ENCODE measurements at regions of chrX and their contacts with region 1.

Region 1: GRCh38 chrX:78886550-78886949 is 58.6 kb upstream of the P2RY10 start:
- DNase-seq: no peak
- H3K4me3 Mint-ChIP-seq: no peak overlapping the region
- H3K27ac Mint-ChIP-seq: no peak overlapping the region
- H3K4me1 Mint-ChIP-seq: peaks cover 8% of the 10 kb centered on the region
- H3K27me3 Mint-ChIP-seq: no peaks in the 10 kb centered on the region

Region 2: DNA sequence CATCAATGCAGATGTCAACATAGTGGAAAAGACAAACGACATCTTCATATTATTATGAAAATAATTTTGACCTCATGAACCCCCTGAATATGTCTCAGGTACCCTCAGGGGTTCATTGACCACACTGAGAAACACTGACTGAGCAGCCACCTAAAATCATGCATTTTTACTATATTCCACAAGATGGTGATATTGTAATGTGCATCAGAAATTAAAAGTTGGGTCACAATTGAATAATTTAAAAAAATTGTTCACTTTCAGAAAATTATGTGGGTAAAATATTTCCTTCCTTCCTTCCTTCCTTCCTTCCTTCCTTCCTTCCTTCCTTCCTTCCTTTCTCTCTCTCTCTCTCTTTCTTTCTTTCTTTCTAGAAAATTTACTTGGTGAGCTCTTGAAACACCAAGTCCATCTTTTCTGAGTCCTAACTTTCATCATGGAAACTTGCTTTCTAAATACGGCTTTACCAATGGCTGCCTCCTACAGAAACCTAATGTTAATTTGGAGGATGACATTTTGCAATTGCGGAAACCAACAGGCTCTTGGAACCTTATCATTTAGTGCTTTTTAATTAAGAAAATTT is 331.1 kb before region 1 on chrX:
- intact Hi-C with region 1: loop called (anchors 2 kb)
- DNase-seq: no peak
- H3K4me3 Mint-ChIP-seq: no peak overlapping the region
- H3K27ac Mint-ChIP-seq: peak overlapping the region; percentile 38
- H3K4me1 Mint-ChIP-seq: peaks cover 5% of the 10 kb centered on the region
- H3K27me3 Mint-ChIP-seq: no peaks in the 10 kb centered on the region

Region 3: DNA sequence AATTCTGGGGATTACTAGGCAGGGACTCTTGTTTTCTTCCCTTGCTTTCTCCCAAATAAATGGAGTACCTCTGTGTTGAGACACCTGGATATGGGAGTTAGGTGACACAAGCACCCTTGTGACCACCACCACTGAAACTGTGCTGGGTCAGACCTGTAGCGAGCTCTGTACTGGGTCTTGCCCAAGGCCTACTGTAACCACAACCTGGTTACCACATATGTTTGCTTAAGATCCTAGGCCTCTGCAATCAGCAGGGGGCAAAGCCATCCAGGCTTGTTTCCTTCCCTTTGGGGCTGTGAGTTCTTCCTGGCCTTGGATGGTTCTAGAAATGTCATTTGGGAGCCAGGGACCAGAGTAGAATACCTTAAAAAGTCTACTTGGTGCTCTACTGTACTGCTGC is 89.6 kb before region 1 on chrX:
- intact Hi-C with region 1: no loop called
- DNase-seq: no peak
- H3K4me3 Mint-ChIP-seq: no peak overlapping the region
- H3K27ac Mint-ChIP-seq: no peak overlapping the region
- H3K4me1 Mint-ChIP-seq: peaks cover 10% of the 10 kb centered on the region
- H3K27me3 Mint-ChIP-seq: no peaks in the 10 kb centered on the region

Region 4: DNA sequence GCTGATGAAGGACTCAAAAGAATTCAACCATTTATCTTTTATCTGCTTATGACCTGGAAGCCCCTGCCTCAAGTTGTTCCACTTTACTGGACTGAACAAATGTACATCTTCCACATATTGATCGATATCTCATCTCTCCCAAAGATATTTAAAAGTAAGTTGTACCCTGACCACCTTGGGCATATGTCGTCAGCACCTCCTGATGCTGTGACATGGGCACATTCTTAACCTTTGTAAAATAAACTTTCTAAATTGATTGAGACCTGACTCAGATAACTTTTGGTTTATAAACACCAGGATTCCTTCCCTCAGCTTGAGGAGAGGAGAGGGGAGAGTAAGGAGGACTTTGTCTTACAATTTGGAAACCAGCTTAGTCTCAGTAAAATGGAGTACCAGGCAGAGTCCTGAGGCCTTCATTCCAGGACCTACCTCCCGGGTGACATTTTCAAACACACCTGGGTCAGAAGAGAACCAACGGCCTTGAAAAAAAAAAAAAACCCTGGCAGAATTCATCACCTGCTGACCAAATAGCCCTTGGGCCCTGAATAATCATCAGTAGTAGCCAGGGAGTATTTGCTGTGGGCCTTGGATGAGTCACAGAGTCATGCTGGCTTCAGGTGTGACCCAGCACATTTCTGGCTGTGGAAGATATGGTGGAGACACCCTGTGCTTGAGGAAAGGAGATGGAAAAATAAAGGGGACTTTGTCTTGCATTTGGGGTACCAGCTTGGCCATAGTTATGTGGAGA is 47.0 kb before region 1 on chrX:
- intact Hi-C with region 1: no loop called
- DNase-seq: no peak
- H3K4me3 Mint-ChIP-seq: no peak overlapping the region
- H3K27ac Mint-ChIP-seq: no peak overlapping the region
- H3K4me1 Mint-ChIP-seq: no peaks in the 10 kb centered on the region
- H3K27me3 Mint-ChIP-seq: peaks cover 2% of the 10 kb centered on the region

Region 5: DNA sequence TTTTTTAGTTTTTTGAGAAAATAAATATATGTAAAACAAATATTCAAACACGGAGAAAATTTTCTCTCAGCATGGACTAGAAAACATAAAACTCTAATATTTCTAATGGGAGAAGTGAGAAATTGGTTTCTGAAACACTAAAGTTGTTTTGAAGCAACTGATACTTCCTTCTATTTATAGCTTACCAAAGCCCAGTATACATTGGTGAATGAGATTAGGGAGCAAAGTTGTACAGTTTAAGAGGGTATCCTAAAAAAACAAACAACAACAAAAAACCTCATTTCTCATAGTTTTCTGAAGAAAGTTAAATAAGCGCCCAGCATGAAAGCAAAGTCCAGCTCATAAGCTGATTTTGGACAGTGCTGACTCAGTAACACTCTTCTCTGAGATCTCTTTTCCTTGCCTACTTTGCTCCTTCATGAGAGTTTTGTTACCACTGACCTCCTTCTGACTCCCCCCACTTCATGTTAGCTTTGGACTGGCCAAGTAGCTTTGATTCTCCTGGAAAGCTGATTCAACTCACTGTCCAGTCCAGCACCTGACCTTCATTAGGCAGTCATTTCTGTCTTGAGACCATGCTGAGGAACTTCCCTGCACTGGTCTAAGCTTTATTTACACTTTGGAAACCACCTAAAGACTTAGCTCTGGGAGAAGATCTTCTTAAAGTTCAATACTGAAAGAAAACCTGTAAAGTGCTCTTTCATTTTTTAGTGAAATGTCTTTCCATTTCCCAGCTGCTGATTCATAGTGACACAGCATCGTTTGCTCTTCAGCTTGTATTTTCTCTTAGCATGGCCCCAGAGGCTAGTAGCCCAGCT is 36.9 kb after region 1 on chrX:
- intact Hi-C with region 1: no loop called
- DNase-seq: no peak
- H3K4me3 Mint-ChIP-seq: no peak overlapping the region
- H3K27ac Mint-ChIP-seq: peak overlapping the region; percentile 91
- H3K4me1 Mint-ChIP-seq: peaks cover 15% of the 10 kb centered on the region
- H3K27me3 Mint-ChIP-seq: no peaks in the 10 kb centered on the region